CD8-positive, alpha-beta memory T cell (primary cell): ENCODE measurements at regions of chr2 and their contacts with region 1.

Region 1: GRCh38 chr2:176652300-176653182 is 383.3 kb downstream of the MTX2 start:
- DNase-seq: peak in 2 of 5 donors; percentile 21 to 40
- H3K4me3 ChIP-seq: no peak overlapping the region
- H3K4me3 Mint-ChIP-seq: no peak overlapping the region
- H3K27ac ChIP-seq: no peak overlapping the region
- H3K27ac Mint-ChIP-seq: no peak overlapping the region
- H3K4me1 ChIP-seq: no peaks in the 10 kb centered on the region
- H3K4me1 Mint-ChIP-seq: peaks cover 8 to 18% (median 10%) of the 10 kb centered on the region in 3 donors
- H3K27me3 ChIP-seq: no peaks in the 10 kb centered on the region
- H3K27me3 Mint-ChIP-seq: peaks cover 15 to 52% of the 10 kb centered on the region in 2 donors

Region 2: GRCh38 chr2:176333685-176334084 is 318.9 kb before region 1 on chr2:
- CTCF ChIA-PET with region 1: no interaction called
- POLR2A ChIA-PET with region 1: no interaction called
- DNase-seq: no peak
- H3K4me3 ChIP-seq: no peak overlapping the region
- H3K4me3 Mint-ChIP-seq: no peak overlapping the region
- H3K27ac ChIP-seq: no peak overlapping the region
- H3K27ac Mint-ChIP-seq: no peak overlapping the region
- H3K4me1 ChIP-seq: no peaks in the 10 kb centered on the region
- H3K4me1 Mint-ChIP-seq: no peaks in the 10 kb centered on the region
- H3K27me3 ChIP-seq: no peaks in the 10 kb centered on the region
- H3K27me3 Mint-ChIP-seq: no peaks in the 10 kb centered on the region

Region 3: DNA sequence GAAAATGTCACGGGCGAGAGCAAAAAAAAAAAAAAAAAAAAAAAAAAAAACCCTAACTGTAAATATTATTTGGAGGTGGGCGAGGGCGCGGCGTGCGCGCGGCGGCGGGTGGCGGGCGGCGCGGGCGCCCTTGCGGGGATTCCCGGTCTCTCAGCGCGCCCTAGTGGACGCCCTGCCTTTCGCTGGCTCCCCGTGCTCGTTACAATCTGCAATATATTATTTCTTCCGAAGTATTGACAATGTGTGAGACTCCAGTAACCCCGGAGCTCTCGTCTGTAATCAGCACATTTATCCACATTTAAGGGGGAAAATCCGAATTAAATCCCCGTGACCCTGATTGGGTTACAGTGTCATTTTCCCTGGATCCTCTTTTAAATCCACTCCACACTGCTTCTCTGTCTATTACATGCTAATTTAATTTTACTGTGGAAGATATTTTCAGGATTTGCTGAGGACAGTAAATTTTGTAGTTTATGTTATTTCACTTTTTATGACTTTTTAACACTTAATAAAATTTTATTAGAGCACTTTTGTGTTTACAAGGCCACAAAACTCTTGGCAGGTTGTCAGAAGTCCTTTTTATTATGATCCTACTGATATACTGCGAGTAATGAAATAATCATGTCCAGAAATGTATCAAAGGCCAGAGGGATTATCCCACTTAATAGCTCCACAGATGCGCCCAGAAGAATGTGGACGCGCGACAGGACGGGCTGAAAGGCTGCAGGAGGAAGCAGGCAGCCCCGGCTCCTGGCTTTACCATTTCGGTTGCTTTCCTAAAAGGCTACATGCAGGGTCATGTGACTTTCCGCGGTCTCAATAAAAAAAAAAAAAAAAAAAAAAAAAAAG is 14.2 kb before region 1 on chr2:
- CTCF ChIA-PET with region 1: interaction called, 18 read pairs
- POLR2A ChIA-PET with region 1: no interaction called
- DNase-seq: peak; percentile 37 to 61 (median 39)
- H3K4me3 ChIP-seq: peak overlapping the region; percentile 36
- H3K4me3 Mint-ChIP-seq: peak overlapping the region in 6 of 7 donors; percentile 57 to 87 (median 70)
- H3K27ac ChIP-seq: no peak overlapping the region
- H3K27ac Mint-ChIP-seq: no peak overlapping the region
- H3K4me1 ChIP-seq: peaks cover 4% of the 10 kb centered on the region
- H3K4me1 Mint-ChIP-seq: peaks cover 6 to 9% (median 8%) of the 10 kb centered on the region in 3 donors
- H3K27me3 ChIP-seq: peaks cover 35% of the 10 kb centered on the region
- H3K27me3 Mint-ChIP-seq: peaks cover 34 to 73% of the 10 kb centered on the region in 2 donors

Region 4: DNA sequence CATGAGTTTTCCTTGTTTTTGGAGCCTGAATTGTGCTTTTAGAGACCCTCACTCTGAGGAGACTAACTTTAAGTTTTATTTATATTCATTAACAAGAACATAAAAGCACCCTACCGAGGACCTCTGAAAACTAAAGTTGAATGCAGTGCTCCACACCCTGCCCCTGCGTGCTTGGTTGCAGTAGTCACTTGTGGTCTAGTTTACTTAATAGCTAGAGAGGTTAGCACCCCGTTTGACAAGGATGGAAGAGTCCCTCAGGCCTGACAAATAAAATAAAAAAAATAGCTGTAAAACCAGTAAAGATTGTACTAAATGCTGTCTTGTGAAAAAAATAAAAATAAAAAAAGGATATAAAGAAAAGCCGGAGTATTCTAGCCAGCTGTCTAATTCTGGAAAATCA is 11.9 kb after region 1 on chr2:
- CTCF ChIA-PET with region 1: interaction called, 12 read pairs
- POLR2A ChIA-PET with region 1: no interaction called
- DNase-seq: no peak
- H3K4me3 ChIP-seq: no peak overlapping the region
- H3K4me3 Mint-ChIP-seq: no peak overlapping the region
- H3K27ac ChIP-seq: no peak overlapping the region
- H3K27ac Mint-ChIP-seq: no peak overlapping the region
- H3K4me1 ChIP-seq: no peaks in the 10 kb centered on the region
- H3K4me1 Mint-ChIP-seq: no peaks in the 10 kb centered on the region
- H3K27me3 ChIP-seq: no peaks in the 10 kb centered on the region
- H3K27me3 Mint-ChIP-seq: peaks cover 14 to 42% of the 10 kb centered on the region in 2 donors

Region 5: DNA sequence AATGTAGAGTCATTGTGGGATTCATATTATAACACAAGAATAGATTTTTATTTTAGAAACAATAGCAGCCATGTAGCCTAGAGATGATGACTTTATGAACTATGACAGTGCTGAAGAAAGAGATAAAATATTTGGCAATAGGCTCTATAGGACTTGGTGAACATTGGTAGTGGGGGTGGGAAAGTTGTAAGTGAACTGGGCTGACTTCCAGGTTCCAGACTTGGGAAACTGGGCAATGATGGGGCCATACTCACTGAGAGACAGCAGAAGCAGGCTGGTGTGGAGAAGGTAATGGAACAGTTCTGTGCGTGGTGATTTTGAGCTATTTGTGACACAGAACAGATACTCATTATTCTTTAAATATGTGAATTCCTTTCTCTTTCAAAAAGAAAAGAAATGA is 89.7 kb after region 1 on chr2:
- CTCF ChIA-PET with region 1: no interaction called
- POLR2A ChIA-PET with region 1: no interaction called
- DNase-seq: no peak
- H3K4me3 ChIP-seq: no peak overlapping the region
- H3K4me3 Mint-ChIP-seq: no peak overlapping the region
- H3K27ac ChIP-seq: no peak overlapping the region
- H3K27ac Mint-ChIP-seq: no peak overlapping the region
- H3K4me1 ChIP-seq: no peaks in the 10 kb centered on the region
- H3K4me1 Mint-ChIP-seq: peaks cover 0 to 7% (median 5%) of the 10 kb centered on the region in 3 donors
- H3K27me3 ChIP-seq: no peaks in the 10 kb centered on the region
- H3K27me3 Mint-ChIP-seq: peaks cover 13 to 15% of the 10 kb centered on the region in 2 donors

Region 6: DNA sequence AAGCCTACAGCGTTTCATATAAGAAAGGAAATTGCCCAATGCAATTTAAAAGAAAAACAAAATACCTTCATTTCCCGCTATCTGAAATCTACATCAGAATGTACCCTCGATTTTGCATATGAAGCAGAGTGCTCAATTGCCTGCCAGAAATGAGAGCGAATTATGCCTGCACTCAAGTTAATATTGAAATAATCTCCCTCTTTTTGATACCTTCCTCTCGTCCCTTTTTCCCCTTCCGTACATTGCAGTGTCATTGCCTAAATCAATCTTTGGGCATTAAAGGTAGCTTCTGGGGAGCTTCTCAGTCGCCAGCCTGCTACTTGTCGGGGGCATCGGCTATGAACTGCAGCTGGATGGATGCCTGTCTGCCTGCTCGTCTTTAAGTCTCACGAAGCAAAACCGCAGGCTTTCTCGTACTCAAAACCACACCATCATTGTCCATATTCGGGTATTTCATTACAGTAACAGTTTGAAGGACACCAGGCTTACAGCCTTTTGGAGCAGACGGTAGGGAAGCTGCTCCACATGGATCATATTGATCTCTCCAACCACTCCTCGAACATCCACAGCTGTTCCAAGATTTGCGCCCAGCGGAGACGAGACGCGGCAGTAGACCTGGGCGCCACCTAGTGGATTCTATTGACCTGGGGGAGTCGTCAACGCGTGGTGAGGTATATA is 496.1 kb after region 1 on chr2:
- CTCF ChIA-PET with region 1: interaction called, 12 read pairs
- POLR2A ChIA-PET with region 1: no interaction called
- DNase-seq: peak; percentile 60 to 78 (median 63)
- H3K4me3 ChIP-seq: peak overlapping the region; percentile 71
- H3K4me3 Mint-ChIP-seq: peak overlapping the region; percentile 70 to 92 (median 89)
- H3K27ac ChIP-seq: no peak overlapping the region
- H3K27ac Mint-ChIP-seq: peak overlapping the region in 7 of 8 donors; percentile 14 to 82 (median 67)
- H3K4me1 ChIP-seq: peaks cover 9% of the 10 kb centered on the region
- H3K4me1 Mint-ChIP-seq: peaks cover 9 to 19% (median 18%) of the 10 kb centered on the region in 3 donors
- H3K27me3 ChIP-seq: peaks cover 29% of the 10 kb centered on the region
- H3K27me3 Mint-ChIP-seq: peaks cover 13 to 29% of the 10 kb centered on the region in 2 donors